Activated CD4-positive, alpha-beta T cell treated with anti-CD3 and anti-CD28 coated beads for 36 hours (primary cell): ENCODE measurements at regions of chr17 and their contacts with region 1.

Region 1: DNA sequence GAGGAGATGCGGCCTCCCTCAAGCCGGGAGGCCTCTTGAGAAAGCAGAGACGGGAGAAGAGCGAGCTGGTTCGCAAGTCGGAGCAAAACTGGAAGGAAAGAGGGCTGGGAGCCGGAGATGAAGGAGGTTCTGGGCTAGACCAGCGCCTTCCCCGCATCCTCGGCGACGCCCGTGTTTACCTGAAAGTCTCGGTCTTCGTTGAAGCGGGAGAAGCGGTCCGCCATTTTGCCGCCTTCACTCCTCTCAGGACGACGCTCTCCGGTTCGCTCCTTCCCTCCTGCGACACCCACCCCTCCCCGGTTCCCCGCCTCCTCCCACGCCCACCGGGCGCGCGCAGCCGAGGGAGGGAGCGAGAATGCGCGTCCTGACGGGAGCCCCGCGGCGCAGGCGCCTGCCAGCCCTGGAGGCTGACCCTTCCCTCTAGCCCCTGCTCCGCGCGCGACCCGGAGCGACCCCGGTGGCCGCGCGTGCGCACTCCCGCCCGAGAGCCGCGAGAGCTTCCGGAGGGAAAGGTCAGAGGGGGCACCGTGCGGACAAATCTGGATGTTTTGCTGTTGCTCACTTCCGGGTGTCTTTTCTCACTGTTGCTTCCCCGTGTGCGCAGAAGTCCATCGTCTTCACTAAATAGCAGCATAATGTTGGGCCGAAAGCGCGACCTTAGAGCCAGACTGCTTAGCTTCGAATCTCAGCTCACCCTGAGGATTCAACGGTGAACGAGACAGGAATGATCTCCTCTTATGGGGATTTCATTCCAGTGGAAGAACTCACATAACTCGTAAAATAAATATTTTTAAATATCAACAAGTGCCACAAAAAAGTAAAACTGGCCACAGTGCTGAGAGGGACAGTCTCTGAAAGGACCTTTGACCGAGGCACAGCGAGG is at the start of gene GPATCH8:
- DNase-seq: peak; percentile 97
- ATAC-seq: peak; percentile 96
- H3K4me3 Mint-ChIP-seq: peak within 1 kb of the TSS; percentile 97
- H3K27ac Mint-ChIP-seq: peak within 1 kb of the TSS; percentile 98
- H3K4me1 Mint-ChIP-seq: peaks cover 34% of the 10 kb centered on the region
- H3K27me3 Mint-ChIP-seq: peaks cover 3% of the 10 kb centered on the region
- total RNA-seq, gene GPATCH8: 39.6 to 43.2 TPM

Region 2: DNA sequence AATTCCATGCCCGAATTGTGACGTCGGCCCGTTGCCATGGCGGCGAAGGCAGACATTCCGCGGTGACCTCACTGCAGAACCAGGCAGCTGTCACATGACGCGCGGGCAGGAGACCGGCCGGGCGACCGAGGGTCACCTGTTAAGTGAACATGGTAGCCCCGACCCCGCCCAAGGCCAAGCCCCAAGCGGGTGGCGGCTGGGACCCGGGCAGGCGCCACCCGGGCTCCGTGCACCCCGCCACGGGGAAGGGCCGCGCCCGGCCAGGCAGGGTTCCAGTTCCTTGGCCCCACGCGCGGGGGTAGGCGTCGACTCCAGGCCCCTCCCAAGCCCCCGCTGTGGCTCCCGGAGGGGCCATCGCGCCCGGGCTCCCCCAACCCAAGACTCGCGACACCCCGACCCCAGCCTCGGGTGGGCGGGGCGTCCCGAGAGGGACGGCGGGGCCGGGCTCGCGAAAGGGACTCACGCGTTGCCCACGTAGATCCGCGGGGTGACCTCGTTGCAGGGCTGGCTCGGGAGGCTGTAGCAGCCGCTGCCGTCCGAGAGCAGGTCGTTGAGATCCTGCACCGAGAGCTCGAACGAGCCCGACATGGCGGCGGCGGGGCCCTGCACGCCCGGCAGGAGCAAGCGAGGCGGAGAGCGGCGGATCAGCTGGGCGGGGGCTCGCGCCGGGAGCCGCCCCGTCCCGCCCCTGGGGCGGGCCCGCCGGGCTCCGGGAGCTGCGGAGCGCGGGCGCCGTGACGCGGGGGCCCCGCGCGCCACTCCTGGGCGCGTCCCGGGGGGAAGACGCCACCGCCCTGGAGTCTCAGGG is 724.8 kb before region 1 on chr17 and contains the start of gene DUSP3:
- CTCF ChIA-PET with region 1: no interaction called
- POLR2A ChIA-PET with region 1: no interaction called
- intact Hi-C with region 1: loop called in 1 of 2 experiments (anchors 2 kb)
- DNase-seq: peak; percentile 85
- ATAC-seq: peak; percentile 98
- H3K4me3 Mint-ChIP-seq: peak within 1 kb of the TSS; percentile 78
- H3K27ac Mint-ChIP-seq: peak within 1 kb of the TSS; percentile 70
- H3K4me1 Mint-ChIP-seq: peaks cover 7% of the 10 kb centered on the region
- H3K27me3 Mint-ChIP-seq: peaks cover 19% of the 10 kb centered on the region
- total RNA-seq, gene DUSP3: 23.4 to 24.8 TPM

Region 3: GRCh38 chr17:44141717-44142285 is 361.6 kb before region 1 on chr17 and contains the start of gene HROB:
- CTCF ChIA-PET with region 1: no interaction called
- POLR2A ChIA-PET with region 1: no interaction called
- intact Hi-C with region 1: loop called in 1 of 2 experiments (anchors 5 kb)
- DNase-seq: peak; percentile 99
- ATAC-seq: peak; percentile 83
- H3K4me3 Mint-ChIP-seq: peak within 1 kb of the TSS; percentile 91
- H3K27ac Mint-ChIP-seq: peak within 1 kb of the TSS; percentile 85
- H3K4me1 Mint-ChIP-seq: peaks cover 24% of the 10 kb centered on the region
- H3K27me3 Mint-ChIP-seq: peaks cover 2% of the 10 kb centered on the region
- total RNA-seq, gene HROB: 17.1 to 23.3 TPM

Region 4: GRCh38 chr17:44218344-44219107 is 284.9 kb before region 1 on chr17:
- CTCF ChIA-PET with region 1: no interaction called
- POLR2A ChIA-PET with region 1: no interaction called
- intact Hi-C with region 1: loop called in 1 of 2 experiments (anchors 1 kb)
- DNase-seq: peak; percentile 93
- ATAC-seq: peak; percentile 43
- H3K4me3 Mint-ChIP-seq: peak overlapping the region; percentile 99
- H3K27ac Mint-ChIP-seq: peak overlapping the region; percentile 99
- H3K4me1 Mint-ChIP-seq: peaks cover 51% of the 10 kb centered on the region
- H3K27me3 Mint-ChIP-seq: no peaks in the 10 kb centered on the region

Region 5: DNA sequence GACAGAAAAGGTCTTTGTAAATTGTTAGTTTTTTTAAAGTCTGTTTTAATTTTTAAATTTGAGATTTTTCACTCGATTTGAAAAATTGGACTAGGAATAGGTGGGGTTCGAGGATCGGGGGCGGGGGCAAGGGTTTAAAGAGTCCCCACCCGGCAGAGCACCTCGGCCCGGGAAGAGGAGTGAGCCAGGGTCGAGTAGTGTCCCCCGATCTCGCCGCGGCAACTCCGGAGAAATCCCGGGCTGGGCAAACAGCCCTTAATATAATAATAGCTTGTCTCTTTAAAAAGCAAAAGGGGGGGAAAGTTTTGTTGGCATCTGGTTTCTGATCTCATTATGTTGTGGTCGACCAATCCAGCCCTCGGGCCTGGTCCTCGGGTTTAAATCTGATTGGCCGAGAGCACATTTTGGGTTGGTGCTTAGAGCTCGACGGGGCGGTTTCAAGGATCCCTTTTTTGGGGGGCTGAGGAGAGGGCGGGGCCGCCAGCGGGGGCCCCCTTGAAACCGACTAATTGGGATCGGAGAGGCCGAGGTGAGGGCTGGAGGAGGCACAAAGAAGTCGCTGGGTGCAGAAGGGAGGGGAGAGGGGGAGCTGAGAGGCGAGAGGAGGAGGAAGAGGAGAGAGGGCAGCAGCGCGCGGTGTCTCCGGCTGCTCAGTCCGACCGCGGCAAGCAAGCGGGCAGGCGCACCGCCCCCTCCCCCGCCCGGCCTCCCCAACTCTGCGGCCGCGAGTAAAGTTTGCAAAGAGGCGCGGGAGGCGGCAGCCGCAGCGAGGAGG is 53.6 kb after region 1 on chr17 and contains the start of gene FZD2:
- CTCF ChIA-PET with region 1: interaction called, 4 read pairs
- POLR2A ChIA-PET with region 1: no interaction called
- intact Hi-C with region 1: loop called in 1 of 2 experiments (anchors 1 kb)
- DNase-seq: peak; percentile 61
- ATAC-seq: peak; percentile 74
- H3K4me3 Mint-ChIP-seq: peak within 1 kb of the TSS; percentile 73
- H3K27ac Mint-ChIP-seq: no peak within 1 kb of the TSS
- H3K4me1 Mint-ChIP-seq: peaks cover 18% of the 10 kb centered on the region
- H3K27me3 Mint-ChIP-seq: peaks cover 63% of the 10 kb centered on the region
- total RNA-seq, gene FZD2: 0.07 to 0.09 TPM

Region 6: GRCh38 chr17:44575403-44575802 is 72.0 kb after region 1 on chr17:
- CTCF ChIA-PET with region 1: no interaction called
- POLR2A ChIA-PET with region 1: no interaction called
- intact Hi-C with region 1: no loop called
- DNase-seq: no peak
- ATAC-seq: no peak
- H3K4me3 Mint-ChIP-seq: no peak overlapping the region
- H3K27ac Mint-ChIP-seq: no peak overlapping the region
- H3K4me1 Mint-ChIP-seq: no peaks in the 10 kb centered on the region
- H3K27me3 Mint-ChIP-seq: peaks cover 14% of the 10 kb centered on the region

Region 7: GRCh38 chr17:45060797-45061605 is 557.6 kb after region 1 on chr17 and contains the start of gene NMT1:
- CTCF ChIA-PET with region 1: no interaction called
- POLR2A ChIA-PET with region 1: no interaction called
- intact Hi-C with region 1: loop called in 1 of 2 experiments (anchors 2 kb)
- DNase-seq: peak; percentile 97
- ATAC-seq: peak; percentile 92
- H3K4me3 Mint-ChIP-seq: peak within 1 kb of the TSS; percentile 84
- H3K27ac Mint-ChIP-seq: peak within 1 kb of the TSS; percentile 96
- H3K4me1 Mint-ChIP-seq: peaks cover 42% of the 10 kb centered on the region
- H3K27me3 Mint-ChIP-seq: no peaks in the 10 kb centered on the region
- total RNA-seq, gene NMT1: 170 to 175 TPM